ENCODE measurements at regions of chr9 and their contacts with region 1.

Region 1: DNA sequence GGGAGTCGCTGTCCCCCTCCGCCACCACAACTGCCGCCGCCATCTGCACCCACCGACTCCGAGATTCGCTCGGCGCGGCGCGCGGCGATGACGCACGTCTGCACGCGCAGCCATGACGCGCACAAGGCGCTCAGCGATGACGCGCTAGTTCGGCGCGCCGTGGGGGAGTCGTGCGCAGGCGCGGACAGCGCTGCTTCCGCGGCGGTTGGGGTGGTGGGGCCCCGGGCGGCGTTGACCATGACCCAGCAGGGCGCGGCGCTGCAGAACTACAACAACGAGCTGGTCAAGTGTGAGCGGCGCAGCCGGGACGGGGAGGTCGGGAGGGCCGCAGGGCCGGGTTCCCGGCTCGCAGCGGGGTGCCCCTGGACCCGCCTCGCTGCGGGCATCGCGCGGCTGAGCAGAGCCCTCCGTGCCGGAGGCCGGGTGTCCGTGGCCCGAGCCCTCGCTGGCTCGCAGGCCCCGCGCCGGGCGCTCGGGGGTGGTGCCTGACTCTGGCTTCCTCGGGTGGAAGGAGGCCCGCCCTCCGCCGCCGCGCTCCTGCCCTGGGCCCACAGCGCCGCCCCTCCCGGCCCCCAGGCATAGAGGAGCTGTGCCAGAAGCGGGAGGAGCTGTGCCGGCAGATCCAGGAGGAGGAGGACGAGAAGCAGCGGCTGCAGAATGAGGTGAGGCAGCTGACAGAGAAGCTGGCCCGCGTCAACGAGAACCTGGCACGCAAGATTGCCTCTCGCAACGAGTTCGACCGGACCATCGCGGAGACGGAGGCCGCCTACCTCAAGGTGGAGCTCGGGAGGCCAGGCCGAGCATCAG is at the starts of genes ANAPC2 and SSNA1:
- DNase-seq: peak; percentile 91 to 97 (median 93)
- ATAC-seq: peak; percentile 72 to 91 (median 90)
- H3K4me3 ChIP-seq: peak within 1 kb of the TSS; percentile 68 to 100 (median 90)
- H3K27ac ChIP-seq: peak within 1 kb of the TSS; percentile 92 to 99 (median 99)
- H3K4me1 ChIP-seq: peaks cover 18 to 75% (median 42%) of the 10 kb centered on the region in 12 donors
- H3K27me3 ChIP-seq: no peaks in the 10 kb centered on the region
- CTCF ChIP-seq: peak in 9 of 12 donors; percentile 16 to 42 (median 29)
- POLR2A ChIP-seq: peak in 1 of 2 donors; percentile 95
- total RNA-seq, gene ANAPC2: 14.3 to 35.9 (median 28.9) TPM
- total RNA-seq, gene SSNA1: 46.0 to 123 (median 59.9) TPM

Region 2: GRCh38 chr9:137070201-137070905 is 118.3 kb before region 1 on chr9 and contains the start of gene SAPCD2:
- intact Hi-C with region 1: no loop called
- DNase-seq: peak; percentile 88 to 94 (median 92)
- ATAC-seq: peak; percentile 93 to 96 (median 94)
- H3K4me3 ChIP-seq: peak within 1 kb of the TSS in 11 of 12 donors; percentile 6 to 58 (median 45)
- H3K27ac ChIP-seq: peak within 1 kb of the TSS; percentile 43 to 94 (median 78)
- H3K4me1 ChIP-seq: peaks cover 0 to 44% (median 9%) of the 10 kb centered on the region in 12 donors
- H3K27me3 ChIP-seq: peaks cover 0 to 14% (median 5%) of the 10 kb centered on the region in 9 donors
- CTCF ChIP-seq: no peak
- POLR2A ChIP-seq: no peak
- total RNA-seq, gene SAPCD2: 0.09 to 2.0 (median 0.20) TPM

Region 3: DNA sequence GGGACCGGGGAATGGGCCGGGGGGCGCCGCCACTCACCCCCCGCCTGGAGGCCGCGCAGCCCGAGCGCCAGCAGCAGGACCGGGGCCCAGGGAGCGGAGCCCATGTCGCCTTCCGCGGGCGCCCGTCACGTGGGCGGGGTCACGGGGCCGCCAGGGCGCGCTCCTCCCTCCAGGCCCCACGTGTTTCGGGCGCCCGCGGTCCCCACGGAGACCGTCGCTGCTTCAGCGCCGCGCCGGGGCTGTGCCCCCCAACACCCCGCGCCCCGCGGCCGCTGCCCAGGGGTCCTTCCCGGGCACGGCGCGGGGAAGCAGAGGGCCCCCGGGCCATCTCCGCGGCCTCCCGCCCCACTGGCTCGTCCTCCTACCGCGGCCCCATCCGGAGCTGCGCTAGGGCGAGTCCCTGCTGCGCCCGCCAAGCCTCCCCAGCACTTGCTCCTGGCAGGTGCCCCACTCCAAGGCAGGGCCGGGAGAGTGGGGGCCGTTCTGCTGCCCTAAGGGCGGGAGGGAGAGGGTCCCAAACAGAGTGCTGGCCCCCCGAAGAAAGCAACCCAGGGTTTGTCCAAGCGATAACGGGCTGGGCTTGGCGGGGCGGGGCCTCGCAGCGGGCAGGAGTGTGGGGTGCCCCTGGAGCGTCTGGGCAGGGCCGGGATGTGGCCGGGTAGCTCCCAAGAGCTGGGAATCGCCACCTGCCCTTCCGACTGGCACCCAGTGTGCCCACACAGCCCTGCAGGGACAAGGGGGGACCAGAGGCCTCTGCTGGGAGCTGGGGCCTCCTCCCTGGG is 73.9 kb before region 1 on chr9 and contains the start of gene DPP7:
- intact Hi-C with region 1: loop called in 1 of 10 experiments (anchors 10 kb)
- DNase-seq: peak; percentile 78 to 87 (median 85)
- ATAC-seq: peak; percentile 11 to 84 (median 80)
- H3K4me3 ChIP-seq: peak within 1 kb of the TSS; percentile 56 to 94 (median 78)
- H3K27ac ChIP-seq: peak within 1 kb of the TSS; percentile 49 to 90 (median 72)
- H3K4me1 ChIP-seq: peaks cover 0 to 45% (median 23%) of the 10 kb centered on the region in 12 donors
- H3K27me3 ChIP-seq: no peaks in the 10 kb centered on the region
- CTCF ChIP-seq: peak in 1 of 12 donors; percentile 5
- POLR2A ChIP-seq: peak in 1 of 2 donors; percentile 50
- total RNA-seq, gene DPP7: 96.6 to 137 (median 119) TPM

Region 4: GRCh38 chr9:137129456-137130175 is 59.1 kb before region 1 on chr9:
- intact Hi-C with region 1: loop called in 3 of 10 experiments (anchors 10 kb)
- DNase-seq: peak; percentile 87 to 95 (median 91)
- ATAC-seq: peak; percentile 99 to 100 (median 99)
- H3K4me3 ChIP-seq: peak overlapping the region; percentile 52 to 89 (median 80)
- H3K27ac ChIP-seq: peak overlapping the region in 11 of 12 donors; percentile 58 to 87 (median 72)
- H3K4me1 ChIP-seq: peaks cover 0 to 39% (median 24%) of the 10 kb centered on the region in 12 donors
- H3K27me3 ChIP-seq: peaks cover 0 to 22% (median 8%) of the 10 kb centered on the region in 9 donors
- CTCF ChIP-seq: no peak
- POLR2A ChIP-seq: peak in 1 of 2 donors; percentile 59

Region 5: DNA sequence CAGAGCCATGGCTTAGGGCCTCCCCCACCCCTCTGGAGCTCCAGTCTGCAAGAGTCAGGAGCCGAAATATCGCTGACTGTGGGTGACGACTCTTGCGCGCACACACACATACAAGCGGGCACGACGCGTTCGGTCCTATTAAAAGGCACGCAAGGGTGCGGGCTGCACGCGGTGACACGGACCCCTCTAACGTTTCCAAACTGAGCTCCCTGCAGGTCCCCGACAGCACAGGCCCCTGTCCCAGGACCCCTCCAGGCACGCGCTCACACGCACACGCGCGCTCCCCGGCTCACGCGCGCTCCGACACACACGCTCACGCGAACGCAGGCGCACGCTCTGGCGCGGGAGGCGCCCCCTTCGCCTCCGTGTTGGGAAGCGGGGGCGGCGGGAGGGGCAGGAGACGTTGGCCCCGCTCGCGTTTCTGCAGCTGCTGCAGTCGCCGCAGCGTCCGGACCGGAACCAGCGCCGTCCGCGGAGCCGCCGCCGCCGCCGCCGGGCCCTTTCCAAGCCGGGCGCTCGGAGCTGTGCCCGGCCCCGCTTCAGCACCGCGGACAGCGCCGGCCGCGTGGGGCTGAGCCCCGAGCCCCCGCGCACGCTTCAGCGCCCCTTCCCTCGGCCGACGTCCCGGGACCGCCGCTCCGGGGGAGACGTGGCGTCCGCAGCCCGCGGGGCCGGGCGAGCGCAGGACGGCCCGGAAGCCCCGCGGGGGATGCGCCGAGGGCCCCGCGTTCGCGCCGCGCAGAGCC is 49.8 kb before region 1 on chr9 and contains the start of gene GRIN1:
- intact Hi-C with region 1: loop called in 1 of 10 experiments (anchors 5 kb)
- DNase-seq: no peak
- ATAC-seq: peak in 3 of 4 donors; percentile 54 to 84 (median 71)
- H3K4me3 ChIP-seq: peak within 1 kb of the TSS in 6 of 12 donors; percentile 8 to 37 (median 24)
- H3K27ac ChIP-seq: no peak within 1 kb of the TSS
- H3K4me1 ChIP-seq: peaks cover 0 to 14% (median 1%) of the 10 kb centered on the region in 12 donors
- H3K27me3 ChIP-seq: peaks cover 25 to 96% (median 75%) of the 10 kb centered on the region in 9 donors
- CTCF ChIP-seq: no peak
- POLR2A ChIP-seq: no peak
- total RNA-seq, gene GRIN1: not detected

Region 6: DNA sequence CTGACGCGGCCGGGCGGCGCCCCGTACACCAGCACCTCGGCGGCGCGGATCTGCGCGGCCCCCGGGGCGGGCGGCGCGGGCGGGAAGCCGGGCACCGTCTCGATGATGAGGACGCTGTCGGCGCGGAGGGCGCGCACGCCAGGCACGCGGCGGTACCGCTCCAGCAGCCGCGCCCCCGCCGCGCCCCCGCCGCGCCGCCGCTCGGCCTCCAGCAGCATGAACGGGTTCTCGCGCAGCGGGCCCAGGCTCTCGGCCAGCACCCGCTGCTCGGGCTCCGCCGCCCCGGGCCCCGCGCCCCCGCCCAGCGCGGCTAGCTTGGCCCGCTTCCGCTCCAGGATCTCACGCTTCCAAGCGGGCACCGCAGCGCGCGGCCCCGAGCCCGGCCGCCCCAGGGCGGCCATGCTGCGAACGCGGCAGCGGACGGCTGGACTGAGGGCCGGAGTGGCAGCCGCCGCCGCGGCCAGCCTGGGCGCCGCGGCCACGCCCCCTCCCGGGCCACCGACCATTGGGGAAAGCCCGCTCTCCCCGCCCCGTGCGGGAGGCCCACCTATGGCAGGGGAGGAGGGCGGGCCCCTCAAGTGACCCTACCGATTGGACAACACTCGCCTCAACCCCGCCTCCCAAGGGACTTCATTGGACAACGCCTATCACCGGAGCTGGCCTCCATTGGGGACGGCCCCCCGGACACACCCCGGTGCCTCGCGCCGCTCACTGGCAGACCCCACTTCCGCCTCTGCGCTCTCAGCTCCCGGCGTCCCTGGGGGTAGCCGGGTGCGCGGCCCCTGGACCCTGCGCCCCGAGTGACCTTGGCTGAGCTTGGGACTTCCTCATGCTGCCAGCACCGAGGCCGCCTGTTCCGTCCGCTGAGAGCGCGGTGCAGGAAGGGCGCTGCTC is 11.9 kb after region 1 on chr9 and contains the start of gene TPRN:
- intact Hi-C with region 1: loop called in 1 of 10 experiments (anchors 1 kb)
- DNase-seq: peak; percentile 99 to 100 (median 100)
- ATAC-seq: peak; percentile 97 to 99 (median 98)
- H3K4me3 ChIP-seq: peak within 1 kb of the TSS; percentile 23 to 94 (median 68)
- H3K27ac ChIP-seq: peak within 1 kb of the TSS; percentile 48 to 99 (median 88)
- H3K4me1 ChIP-seq: peaks cover 10 to 88% (median 74%) of the 10 kb centered on the region in 12 donors
- H3K27me3 ChIP-seq: no peaks in the 10 kb centered on the region
- CTCF ChIP-seq: peak in 1 of 12 donors; percentile 7
- POLR2A ChIP-seq: peak; percentile 80 to 85
- total RNA-seq, gene TPRN: 11.5 to 18.0 (median 16.6) TPM

Measured in heart left ventricle (tissue), 16 donors.